Natural killer cell (primary cell): ENCODE measurements at regions of chr17 and their contacts with region 1.

Region 1: DNA sequence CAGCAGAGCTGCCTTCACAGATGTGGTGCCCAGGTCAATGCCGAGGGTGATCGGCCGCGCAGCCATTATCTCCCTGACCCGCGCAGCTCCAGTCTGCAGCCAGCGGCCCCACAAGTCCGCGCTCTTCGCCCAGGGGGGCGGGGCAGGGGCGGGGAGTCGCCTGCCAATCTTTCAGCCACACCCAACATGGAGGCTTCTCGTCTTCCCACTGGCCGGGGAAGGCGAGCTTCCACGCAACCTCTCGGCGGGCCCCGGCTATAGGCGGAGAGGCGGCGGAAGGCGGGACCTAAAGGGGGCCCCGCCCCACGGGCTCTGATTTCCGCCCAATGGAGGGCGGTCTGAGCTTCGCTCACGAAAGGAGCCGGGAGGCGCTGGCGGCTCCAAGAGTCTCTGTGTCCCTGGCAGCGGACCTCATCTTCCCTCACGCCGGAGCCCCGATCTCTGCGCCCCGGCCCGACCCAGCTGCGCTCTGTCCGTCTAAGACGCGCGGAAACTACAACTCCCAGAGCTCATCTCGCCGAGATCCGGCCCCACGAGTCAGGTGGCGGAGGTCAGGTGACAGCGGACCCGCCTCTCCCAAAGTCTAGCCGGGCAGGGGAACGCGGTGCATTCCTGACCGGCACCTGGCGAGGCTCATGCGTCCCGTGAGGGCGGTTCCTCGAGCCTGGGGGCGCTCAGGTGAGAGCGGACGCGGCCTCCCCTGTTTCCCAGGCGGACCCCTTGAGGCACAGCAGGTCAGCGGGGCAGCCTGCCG is at the starts of genes CTNS and SHPK:
- DNase-seq: peak; percentile 93 to 96
- ATAC-seq: peak; percentile 97 to 99 (median 98)
- H3K4me3 ChIP-seq: peak within 1 kb of the TSS; percentile 100
- H3K4me3 Mint-ChIP-seq: peak within 1 kb of the TSS; percentile 97
- H3K27ac ChIP-seq: peak within 1 kb of the TSS; percentile 100
- H3K27ac Mint-ChIP-seq: peak within 1 kb of the TSS; percentile 95 to 97
- H3K4me1 ChIP-seq: peaks cover 19% of the 10 kb centered on the region
- H3K4me1 Mint-ChIP-seq: peaks cover 15 to 29% of the 10 kb centered on the region in 2 donors
- H3K27me3 ChIP-seq: no peaks in the 10 kb centered on the region
- H3K27me3 Mint-ChIP-seq: no peaks in the 10 kb centered on the region
- CTCF ChIP-seq: no peak
- total RNA-seq, gene CTNS: 7.6 to 24.2 (median 9.6) TPM
- total RNA-seq, gene SHPK: 5.8 to 9.3 (median 8.9) TPM

Region 2: GRCh38 chr17:3048767-3049471 is 587.4 kb before region 1 on chr17:
- intact Hi-C with region 1: loop called (anchors 10 kb)
- DNase-seq: peak; percentile 90 to 97
- ATAC-seq: peak; percentile 96 to 99 (median 98)
- H3K4me3 ChIP-seq: peak overlapping the region; percentile 70
- H3K4me3 Mint-ChIP-seq: peak overlapping the region; percentile 92
- H3K27ac ChIP-seq: peak overlapping the region; percentile 50
- H3K27ac Mint-ChIP-seq: peak overlapping the region; percentile 69 to 86
- H3K4me1 ChIP-seq: peaks cover 13% of the 10 kb centered on the region
- H3K4me1 Mint-ChIP-seq: peaks cover 0 to 10% of the 10 kb centered on the region in 2 donors
- H3K27me3 ChIP-seq: no peaks in the 10 kb centered on the region
- H3K27me3 Mint-ChIP-seq: no peaks in the 10 kb centered on the region
- CTCF ChIP-seq: peak; percentile 49

Region 3: GRCh38 chr17:3668279-3669085 is 32.2 kb after region 1 on chr17 and contains the starts of genes EMC6 and TAX1BP3:
- intact Hi-C with region 1: loop called (anchors 1 kb)
- DNase-seq: peak; percentile 99 to 100
- ATAC-seq: peak; percentile 92 to 97 (median 93)
- H3K4me3 ChIP-seq: peak within 1 kb of the TSS; percentile 99
- H3K4me3 Mint-ChIP-seq: peak within 1 kb of the TSS; percentile 94
- H3K27ac ChIP-seq: peak within 1 kb of the TSS; percentile 84
- H3K27ac Mint-ChIP-seq: peak within 1 kb of the TSS; percentile 88 to 93
- H3K4me1 ChIP-seq: peaks cover 21% of the 10 kb centered on the region
- H3K4me1 Mint-ChIP-seq: peaks cover 8 to 17% of the 10 kb centered on the region in 2 donors
- H3K27me3 ChIP-seq: no peaks in the 10 kb centered on the region
- H3K27me3 Mint-ChIP-seq: no peaks in the 10 kb centered on the region
- CTCF ChIP-seq: no peak
- total RNA-seq, gene EMC6: 29.3 to 34.7 (median 32.1) TPM
- total RNA-seq, gene TAX1BP3: 15.1 to 17.0 (median 16.3) TPM